Heart left ventricle (tissue), 16 donors: ENCODE measurements at regions of chr9 and their contacts with region 1.

Region 1: GRCh38 chr9:74887041-74887980 is at the start of gene TRPM6:
- DNase-seq: peak; percentile 77 to 92 (median 87)
- ATAC-seq: peak; percentile 84 to 96 (median 94)
- H3K4me3 ChIP-seq: peak within 1 kb of the TSS; percentile 32 to 68 (median 62)
- H3K27ac ChIP-seq: peak within 1 kb of the TSS; percentile 66 to 84 (median 74)
- H3K4me1 ChIP-seq: peaks cover 0 to 17% (median 5%) of the 10 kb centered on the region in 12 donors
- H3K27me3 ChIP-seq: peaks cover 0 to 15% (median 6%) of the 10 kb centered on the region in 9 donors
- CTCF ChIP-seq: no peak
- POLR2A ChIP-seq: no peak
- total RNA-seq, gene TRPM6: 0.12 to 0.75 (median 0.48) TPM in 7 of 9 donors, not detected in the others

Region 2: DNA sequence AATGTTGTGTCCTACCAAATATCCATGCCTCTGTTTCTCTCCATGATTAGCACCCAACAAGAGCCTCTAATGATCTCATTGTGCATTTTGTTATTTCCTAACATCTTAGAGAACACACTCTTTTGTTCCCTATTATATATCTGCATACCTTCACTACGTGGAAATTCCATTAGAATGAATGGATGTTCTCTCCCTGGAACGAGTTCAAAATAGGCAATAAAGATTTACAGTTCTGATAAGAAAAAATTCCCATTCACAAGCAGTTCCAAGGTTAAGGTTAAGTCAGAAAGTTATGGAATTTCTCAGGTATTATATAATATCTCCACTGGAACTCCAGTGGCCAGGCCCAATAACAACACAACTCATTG is 83.3 kb before region 1 on chr9:
- intact Hi-C with region 1: loop called in 1 of 10 experiments (anchors 10 kb)
- DNase-seq: no peak
- ATAC-seq: no peak
- H3K4me3 ChIP-seq: no peak overlapping the region
- H3K27ac ChIP-seq: no peak overlapping the region
- H3K4me1 ChIP-seq: no peaks in the 10 kb centered on the region
- H3K27me3 ChIP-seq: no peaks in the 10 kb centered on the region
- CTCF ChIP-seq: no peak
- POLR2A ChIP-seq: no peak

Region 3: GRCh38 chr9:74824654-74825053 is 62.7 kb before region 1 on chr9:
- intact Hi-C with region 1: loop called in 1 of 10 experiments (anchors 10 kb)
- DNase-seq: peak in 4 of 5 donors; percentile 39 to 65 (median 48)
- ATAC-seq: peak in 3 of 4 donors; percentile 50 to 80 (median 73)
- H3K4me3 ChIP-seq: no peak overlapping the region
- H3K27ac ChIP-seq: no peak overlapping the region
- H3K4me1 ChIP-seq: peaks cover 0 to 6% (median 0%) of the 10 kb centered on the region in 12 donors
- H3K27me3 ChIP-seq: no peaks in the 10 kb centered on the region
- CTCF ChIP-seq: no peak
- POLR2A ChIP-seq: no peak

Region 4: DNA sequence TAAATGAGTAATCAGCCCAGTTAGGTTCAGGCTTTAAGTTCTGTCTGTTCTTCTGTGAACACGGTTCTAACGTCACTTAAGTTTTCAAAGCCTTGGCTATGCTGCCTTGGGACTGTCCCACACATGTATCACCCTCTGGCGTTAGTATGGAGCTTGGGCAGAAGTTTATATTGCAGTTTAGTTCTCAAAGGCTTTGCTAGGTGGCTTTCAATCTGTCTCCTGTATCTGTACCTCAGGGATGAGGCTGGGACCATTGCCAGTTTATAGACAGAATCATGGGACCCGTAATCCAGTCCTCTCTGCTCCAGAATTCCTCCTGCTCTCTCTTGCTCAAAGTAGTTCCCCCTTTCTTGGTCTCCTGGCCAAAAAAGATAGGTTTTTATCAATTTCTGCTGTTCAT is 53.3 kb after region 1 on chr9:
- intact Hi-C with region 1: loop called in 1 of 10 experiments (anchors 10 kb)
- DNase-seq: no peak
- ATAC-seq: peak in 1 of 4 donors; percentile 72
- H3K4me3 ChIP-seq: no peak overlapping the region
- H3K27ac ChIP-seq: no peak overlapping the region
- H3K4me1 ChIP-seq: no peaks in the 10 kb centered on the region
- H3K27me3 ChIP-seq: no peaks in the 10 kb centered on the region
- CTCF ChIP-seq: peak in 4 of 12 donors; percentile 10 to 30 (median 20)
- POLR2A ChIP-seq: no peak